Panc1 (cell line): ENCODE measurements at regions of chr7 and their contacts with region 1.

Region 1: GRCh38 chr7:139109188-139109982 is at the start of gene ZC3HAV1:
- DNase-seq: peak; percentile 77
- ATAC-seq: peak; percentile 91
- H3K4me3 ChIP-seq: peak within 1 kb of the TSS; percentile 75 to 86
- H3K27ac ChIP-seq: peak within 1 kb of the TSS; percentile 99
- H3K4me1 ChIP-seq: peaks cover 23% of the 10 kb centered on the region; the same call in 1 of the 2 replicates
- H3K27me3 ChIP-seq: no peaks in the 10 kb centered on the region
- CTCF ChIP-seq: no peak
- total RNA-seq, gene ZC3HAV1: 47.1 TPM

Region 2: DNA sequence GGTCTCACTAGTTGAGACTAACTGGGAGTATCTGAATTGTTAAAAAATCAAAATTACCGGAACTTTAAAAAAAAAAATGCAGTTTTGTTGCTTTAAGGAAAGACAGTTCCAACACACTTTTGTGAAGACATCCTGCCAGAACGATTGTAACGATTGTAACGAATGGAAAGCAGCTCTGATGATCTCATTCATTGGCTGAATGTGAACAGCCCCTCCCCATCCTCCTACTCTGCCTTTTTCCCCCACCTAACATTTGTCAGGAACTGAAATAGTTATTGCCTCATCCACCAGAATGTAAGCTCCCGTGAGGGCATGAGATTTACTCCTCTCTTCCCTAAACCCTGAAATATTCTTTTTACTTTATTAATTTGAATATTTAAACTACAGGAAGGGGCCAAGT is 50.4 kb before region 1 on chr7:
- CTCF ChIA-PET with region 1: no interaction called
- POLR2A ChIA-PET with region 1: no interaction called
- in situ Hi-C with region 1: no loop called
- intact Hi-C with region 1: no loop called
- DNase-seq: no peak
- ATAC-seq: no peak
- H3K4me3 ChIP-seq: no peak overlapping the region
- H3K27ac ChIP-seq: no peak overlapping the region
- H3K4me1 ChIP-seq: no peaks in the 10 kb centered on the region
- H3K27me3 ChIP-seq: no peaks in the 10 kb centered on the region
- CTCF ChIP-seq: no peak

Region 3: DNA sequence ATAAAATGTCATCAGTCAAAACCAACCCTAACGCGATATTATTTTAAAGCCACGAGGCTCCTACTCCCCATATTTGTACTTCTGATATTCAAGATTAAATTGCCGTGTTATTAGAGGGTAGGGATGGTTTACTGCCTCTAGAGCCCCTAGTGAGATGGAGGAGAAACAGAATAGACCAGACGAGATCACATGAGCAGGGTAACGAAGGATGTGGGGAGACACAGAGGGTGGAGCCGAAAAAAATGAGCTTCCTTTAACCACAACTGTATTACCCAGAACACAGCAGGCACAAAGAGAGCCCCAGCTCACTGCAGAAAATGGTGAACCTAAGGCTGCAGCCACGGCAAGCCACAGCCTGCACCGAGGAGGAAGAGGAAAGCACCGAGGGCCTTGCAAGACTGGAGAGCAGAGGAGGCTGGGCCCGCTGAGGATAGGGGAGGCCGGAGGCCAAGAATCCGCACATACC is 14.2 kb before region 1 on chr7:
- CTCF ChIA-PET with region 1: interaction called, 12 read pairs
- POLR2A ChIA-PET with region 1: interaction called, 18 read pairs
- in situ Hi-C with region 1: no loop called
- intact Hi-C with region 1: no loop called
- DNase-seq: no peak
- ATAC-seq: peak; percentile 64
- H3K4me3 ChIP-seq: no peak overlapping the region
- H3K27ac ChIP-seq: peak overlapping the region; percentile 12
- H3K4me1 ChIP-seq: peaks cover 23% of the 10 kb centered on the region
- H3K27me3 ChIP-seq: no peaks in the 10 kb centered on the region
- CTCF ChIP-seq: no peak

Region 4: DNA sequence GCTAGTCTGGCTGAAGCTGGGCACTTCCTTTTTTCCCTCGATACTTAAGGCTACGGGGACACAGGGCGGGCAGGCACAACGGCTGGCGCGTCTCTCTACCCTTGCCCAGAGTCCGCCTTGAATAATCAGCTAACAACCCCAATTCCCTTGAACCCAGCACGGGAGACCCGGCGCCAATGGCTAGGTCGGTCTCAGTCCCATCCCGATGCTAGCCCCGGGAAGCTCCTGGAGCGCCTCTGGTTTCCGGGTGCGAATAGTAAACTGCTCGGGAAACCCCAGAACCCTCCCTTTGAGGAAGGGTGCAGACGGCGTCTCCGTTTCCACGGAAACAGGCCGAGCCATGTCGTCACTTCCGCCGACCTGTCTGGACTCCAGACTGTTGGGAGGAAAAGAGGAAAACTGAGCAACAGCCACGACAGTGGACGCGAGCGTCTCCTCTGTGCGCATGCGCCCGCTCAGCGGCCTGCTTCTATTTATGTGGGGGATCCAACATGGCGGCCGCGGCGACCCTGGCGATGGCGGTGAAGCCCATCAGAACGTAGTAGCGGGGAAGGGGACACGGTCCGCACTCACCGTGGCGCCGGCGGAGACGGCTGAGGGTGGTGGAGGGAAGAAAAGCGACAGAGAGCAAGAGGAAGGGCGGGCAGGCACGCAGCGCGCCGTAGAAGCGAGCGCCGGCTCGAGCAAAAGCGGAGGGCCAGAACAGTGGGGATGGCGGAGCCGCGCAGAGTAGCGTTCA is 121.6 kb after region 1 on chr7 and contains the start of gene UBN2:
- CTCF ChIA-PET with region 1: no interaction called
- POLR2A ChIA-PET with region 1: interaction called, 6 read pairs
- in situ Hi-C with region 1: no loop called
- intact Hi-C with region 1: loop called (anchors 5 kb)
- DNase-seq: peak; percentile 92
- ATAC-seq: peak; percentile 98
- H3K4me3 ChIP-seq: peak within 1 kb of the TSS; percentile 87 to 93
- H3K27ac ChIP-seq: peak within 1 kb of the TSS; percentile 84
- H3K4me1 ChIP-seq: peaks cover 11% of the 10 kb centered on the region
- H3K27me3 ChIP-seq: peaks cover 4% of the 10 kb centered on the region; the same call in 1 of the 2 replicates
- CTCF ChIP-seq: no peak
- total RNA-seq, gene UBN2: 14.0 TPM